ENCODE measurements at regions of chr21 and their contacts with region 1.

Region 1: GRCh38 chr21:43290421-43291345 is 121.9 kb downstream of the CRYAA start:
- DNase-seq: peak; percentile 94
- H3K4me3 ChIP-seq: peak overlapping the region; percentile 2
- H3K27ac ChIP-seq: peak overlapping the region; percentile 2
- H3K4me1 ChIP-seq: peaks cover 49% of the 10 kb centered on the region
- CTCF ChIP-seq: no peak

Region 2: GRCh38 chr21:43312751-43313169 is 22.1 kb after region 1 on chr21:
- CTCF ChIA-PET with region 1: no interaction called
- POLR2A ChIA-PET with region 1: no interaction called
- intact Hi-C with region 1: loop called (anchors 1 kb)
- DNase-seq: peak; percentile 60
- H3K4me3 ChIP-seq: peak overlapping the region; percentile 41
- H3K27ac ChIP-seq: peak overlapping the region; percentile 54
- H3K4me1 ChIP-seq: peaks cover 42% of the 10 kb centered on the region
- CTCF ChIP-seq: no peak

Region 3: GRCh38 chr21:43352568-43353281 is 62.0 kb after region 1 on chr21:
- CTCF ChIA-PET with region 1: interaction called, 3 read pairs
- POLR2A ChIA-PET with region 1: interaction called, 3 read pairs
- intact Hi-C with region 1: loop called (anchors 5 kb)
- DNase-seq: peak; percentile 95
- H3K4me3 ChIP-seq: peak overlapping the region; percentile 55
- H3K27ac ChIP-seq: peak overlapping the region; percentile 91
- H3K4me1 ChIP-seq: peaks cover 48% of the 10 kb centered on the region
- CTCF ChIP-seq: no peak

Region 4: DNA sequence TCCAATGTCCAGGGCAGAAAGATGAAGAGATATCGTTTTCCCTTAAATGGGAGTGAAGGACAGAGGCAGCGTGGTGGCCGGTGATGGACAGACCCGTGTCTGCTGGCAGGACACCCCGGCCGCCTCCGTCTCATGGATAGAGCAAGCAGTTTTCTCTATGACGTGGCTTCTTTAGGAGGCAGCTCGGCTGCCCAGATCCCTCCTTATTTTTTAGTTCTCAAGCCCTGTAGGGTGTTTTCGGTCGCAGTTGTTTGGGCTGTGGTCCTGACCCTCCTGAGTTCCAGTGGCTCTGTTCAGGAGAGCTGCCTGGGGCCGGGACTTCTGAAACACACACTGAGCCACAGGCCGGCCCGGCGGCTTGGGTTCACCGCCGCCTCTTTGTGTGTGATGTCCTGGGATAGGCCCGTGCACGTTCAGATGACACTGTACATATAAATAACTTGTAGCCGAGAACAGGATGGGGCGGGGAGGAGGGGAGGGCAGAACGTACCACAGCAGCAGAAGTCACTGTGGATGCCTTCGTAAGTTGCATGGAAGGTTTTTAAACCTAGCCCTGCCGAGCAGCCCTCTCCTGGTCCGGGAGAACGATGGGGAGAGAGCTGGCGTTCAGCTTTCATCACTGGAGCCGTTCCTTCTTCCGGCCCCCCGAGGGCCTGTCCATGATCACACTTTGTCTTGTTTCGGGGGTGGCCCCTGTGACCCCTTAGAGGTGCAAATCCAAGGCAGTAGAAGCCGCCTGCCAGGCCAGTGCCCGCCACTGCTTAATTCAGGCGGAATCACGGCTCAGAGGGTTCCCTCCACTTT is 71.0 kb after region 1 on chr21:
- CTCF ChIA-PET with region 1: no interaction called
- POLR2A ChIA-PET with region 1: no interaction called
- intact Hi-C with region 1: loop called (anchors 2 kb)
- DNase-seq: peak; percentile 89
- H3K4me3 ChIP-seq: peak overlapping the region; percentile 65
- H3K27ac ChIP-seq: peak overlapping the region; percentile 91
- H3K4me1 ChIP-seq: peaks cover 51% of the 10 kb centered on the region
- CTCF ChIP-seq: no peak; the same call in 1 of the 2 replicates